GM12878 (cell line): ENCODE measurements at regions of chr20 and their contacts with region 1.

Region 1: DNA sequence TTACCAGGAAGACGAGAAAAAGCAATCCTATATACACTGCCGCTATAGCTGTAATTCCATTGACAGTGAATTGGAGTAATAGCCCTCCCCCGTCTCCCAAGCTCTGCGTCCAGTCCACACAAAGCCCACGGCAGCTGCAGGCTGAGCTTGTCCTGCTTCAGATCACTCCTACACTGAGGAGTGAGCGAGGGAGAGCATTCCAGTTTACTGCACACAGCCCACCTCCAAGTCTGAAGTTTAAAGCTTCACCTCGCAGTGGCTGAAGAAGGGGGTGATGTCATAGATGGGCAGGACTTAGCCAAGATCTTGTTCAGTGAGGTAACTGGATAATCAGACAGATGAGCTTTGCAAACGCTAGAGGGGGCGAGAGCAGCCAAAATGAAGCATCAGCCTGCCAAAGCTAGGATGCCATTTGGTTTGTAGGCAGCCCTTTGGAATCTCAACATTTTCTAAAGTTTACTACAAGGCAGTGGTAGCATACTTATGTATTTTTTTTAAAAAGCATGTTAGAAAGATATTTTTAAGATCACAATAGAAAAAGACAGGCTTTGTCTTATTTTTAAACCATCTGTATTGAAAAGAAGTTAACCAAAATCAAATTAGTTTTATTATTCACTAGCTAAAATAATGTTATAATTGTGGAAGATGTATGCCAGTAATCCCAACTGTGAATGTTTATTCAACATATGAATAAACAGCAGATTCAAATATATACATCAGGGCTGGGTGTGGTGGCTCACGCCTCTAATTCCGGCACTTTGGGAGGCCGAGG is at the start of gene FLRT3:
- DNase-seq: peak; percentile 70
- ATAC-seq: peak; percentile 93
- H3K4me3 ChIP-seq: no peak within 1 kb of the TSS
- H3K27ac ChIP-seq: no peak within 1 kb of the TSS
- H3K4me1 ChIP-seq: no peaks in the 10 kb centered on the region
- H3K27me3 ChIP-seq: no peaks in the 10 kb centered on the region
- CTCF ChIP-seq: peak; percentile 70 to 85 (median 75)
- EP300 ChIP-seq: no peak
- POLR2A ChIP-seq: no peak
- RAD21 ChIP-seq: peak; percentile 69
- polyA plus RNA-seq, gene FLRT3: 0.47 to 1.0 TPM

Region 2: GRCh38 chr20:14313341-14314020 is 24.1 kb before region 1 on chr20:
- CTCF ChIA-PET with region 1: interaction called, 4 read pairs
- POLR2A ChIA-PET with region 1: no interaction called
- RAD21 ChIA-PET with region 1: interaction called, 3 read pairs
- SMC1A ChIA-PET with region 1: interaction called, 10 read pairs
- in situ Hi-C with region 1: no loop called
- intact Hi-C with region 1: no loop called
- DNase-seq: no peak
- ATAC-seq: no peak
- H3K4me3 ChIP-seq: no peak overlapping the region
- H3K27ac ChIP-seq: no peak overlapping the region
- H3K4me1 ChIP-seq: no peaks in the 10 kb centered on the region
- H3K27me3 ChIP-seq: no peaks in the 10 kb centered on the region
- CTCF ChIP-seq: no peak
- EP300 ChIP-seq: no peak
- POLR2A ChIP-seq: no peak
- RAD21 ChIP-seq: no peak

Region 3: GRCh38 chr20:14401479-14402138 is 64.0 kb after region 1 on chr20:
- CTCF ChIA-PET with region 1: no interaction called
- POLR2A ChIA-PET with region 1: no interaction called
- RAD21 ChIA-PET with region 1: no interaction called
- SMC1A ChIA-PET with region 1: interaction called, 4 read pairs
- in situ Hi-C with region 1: no loop called
- intact Hi-C with region 1: loop called (anchors 5 kb)
- DNase-seq: no peak
- ATAC-seq: peak; percentile 78
- H3K4me3 ChIP-seq: no peak overlapping the region
- H3K27ac ChIP-seq: no peak overlapping the region
- H3K4me1 ChIP-seq: no peaks in the 10 kb centered on the region
- H3K27me3 ChIP-seq: no peaks in the 10 kb centered on the region
- CTCF ChIP-seq: no peak
- EP300 ChIP-seq: peak; percentile 84 to 89; a peak in 3 of 4 replicates
- POLR2A ChIP-seq: no peak
- RAD21 ChIP-seq: no peak

Region 4: DNA sequence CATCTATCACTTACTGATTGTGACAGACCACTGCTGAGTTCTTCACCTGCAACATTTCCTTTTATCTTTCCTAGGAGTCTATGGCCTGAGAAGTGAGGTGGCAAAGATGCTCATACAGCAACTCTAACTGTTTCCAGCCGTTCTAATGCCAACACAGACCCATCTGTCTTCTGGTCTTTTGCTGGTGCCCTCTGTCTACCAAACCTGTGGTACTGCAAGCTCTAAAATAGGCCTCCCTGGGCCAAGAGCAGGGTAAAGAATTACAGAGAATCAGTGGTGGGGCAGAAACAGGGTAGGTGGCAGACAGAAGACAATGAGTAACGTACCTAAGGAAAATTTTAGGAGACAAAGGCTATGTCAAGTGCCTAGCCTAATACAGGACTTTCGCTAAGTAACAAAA is 610.8 kb after region 1 on chr20:
- CTCF ChIA-PET with region 1: interaction called, 14 read pairs
- POLR2A ChIA-PET with region 1: no interaction called
- RAD21 ChIA-PET with region 1: interaction called, 12 read pairs
- SMC1A ChIA-PET with region 1: interaction called, 6 read pairs
- in situ Hi-C with region 1: no loop called
- intact Hi-C with region 1: loop called (anchors 10 kb)
- DNase-seq: no peak
- ATAC-seq: peak; percentile 60
- H3K4me3 ChIP-seq: no peak overlapping the region
- H3K27ac ChIP-seq: no peak overlapping the region
- H3K4me1 ChIP-seq: no peaks in the 10 kb centered on the region
- H3K27me3 ChIP-seq: no peaks in the 10 kb centered on the region
- CTCF ChIP-seq: peak in 2 of 3 experiments; percentile 22 to 36; a peak in 2 of 6 replicates
- EP300 ChIP-seq: no peak
- POLR2A ChIP-seq: no peak
- RAD21 ChIP-seq: 0 out of 2 replicates have a peak, but pooled peaks have one; percentile 7

Region 5: DNA sequence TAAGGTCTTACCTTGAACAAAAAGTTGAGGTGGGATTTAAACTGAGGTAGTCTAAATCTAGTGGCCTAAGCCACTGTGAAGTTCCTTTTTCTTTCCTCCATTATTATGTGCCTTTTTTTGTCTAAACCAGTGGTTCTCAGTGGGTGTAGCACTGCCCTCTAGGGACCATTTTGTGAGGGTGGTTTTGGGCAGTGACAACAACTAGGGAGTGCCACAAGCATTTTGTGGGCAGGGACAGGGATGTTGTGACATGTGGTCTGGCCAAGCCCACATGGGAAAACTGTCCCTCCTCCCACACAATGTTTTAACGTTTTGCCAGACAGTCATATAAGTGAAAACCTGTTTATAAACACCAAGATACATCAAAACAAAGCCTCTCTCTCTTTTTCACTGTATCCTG is 899.2 kb after region 1 on chr20:
- CTCF ChIA-PET with region 1: interaction called, 25 read pairs
- POLR2A ChIA-PET with region 1: no interaction called
- RAD21 ChIA-PET with region 1: interaction called, 22 read pairs
- SMC1A ChIA-PET with region 1: interaction called, 12 read pairs
- in situ Hi-C with region 1: loop called (anchors 10 kb)
- intact Hi-C with region 1: loop called (anchors 1 kb)
- DNase-seq: peak; percentile 38
- ATAC-seq: peak; percentile 96
- H3K4me3 ChIP-seq: no peak overlapping the region
- H3K27ac ChIP-seq: no peak overlapping the region
- H3K4me1 ChIP-seq: no peaks in the 10 kb centered on the region
- H3K27me3 ChIP-seq: no peaks in the 10 kb centered on the region
- CTCF ChIP-seq: peak; percentile 56 to 66 (median 61)
- EP300 ChIP-seq: no peak
- POLR2A ChIP-seq: no peak
- RAD21 ChIP-seq: peak; percentile 87

Region 6: DNA sequence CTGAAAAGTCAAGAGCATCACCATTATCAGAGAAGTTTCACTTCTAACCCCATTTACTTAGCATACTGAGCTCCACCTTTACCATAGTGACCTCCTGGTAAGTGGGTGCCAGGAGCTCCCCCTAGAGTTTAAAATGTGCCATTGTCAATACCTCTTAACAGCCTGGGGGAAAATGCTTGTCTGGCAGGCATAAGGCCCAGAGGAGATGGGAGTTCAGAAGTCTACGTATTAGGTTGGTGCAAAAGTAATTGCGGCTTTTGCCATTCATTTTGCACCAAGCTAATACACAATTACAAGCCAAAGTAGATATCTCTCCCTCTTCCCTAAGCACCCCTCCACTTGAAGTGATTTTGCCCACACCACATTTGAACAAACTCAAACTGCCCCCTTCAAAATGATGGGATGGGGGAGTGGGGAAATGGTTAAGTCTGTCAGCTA is 1316.6 kb after region 1 on chr20:
- CTCF ChIA-PET with region 1: interaction called, 8 read pairs
- POLR2A ChIA-PET with region 1: no interaction called
- RAD21 ChIA-PET with region 1: interaction called, 15 read pairs
- SMC1A ChIA-PET with region 1: interaction called, 10 read pairs
- in situ Hi-C with region 1: loop called (anchors 25 kb)
- intact Hi-C with region 1: loop called (anchors 1 kb)
- DNase-seq: peak; percentile 43
- ATAC-seq: peak; percentile 98
- H3K4me3 ChIP-seq: no peak overlapping the region
- H3K27ac ChIP-seq: no peak overlapping the region
- H3K4me1 ChIP-seq: peaks cover 4% of the 10 kb centered on the region
- H3K27me3 ChIP-seq: no peaks in the 10 kb centered on the region
- CTCF ChIP-seq: peak; percentile 69 to 82 (median 71); a peak in 5 of 6 replicates
- EP300 ChIP-seq: no peak
- POLR2A ChIP-seq: no peak
- RAD21 ChIP-seq: peak; percentile 84